Activated CD4-positive, alpha-beta memory T cell treated with anti-CD3 and anti-CD28 coated beads for 36 hours (primary cell): ENCODE measurements at regions of chr4 and their contacts with region 1.

Region 1: DNA sequence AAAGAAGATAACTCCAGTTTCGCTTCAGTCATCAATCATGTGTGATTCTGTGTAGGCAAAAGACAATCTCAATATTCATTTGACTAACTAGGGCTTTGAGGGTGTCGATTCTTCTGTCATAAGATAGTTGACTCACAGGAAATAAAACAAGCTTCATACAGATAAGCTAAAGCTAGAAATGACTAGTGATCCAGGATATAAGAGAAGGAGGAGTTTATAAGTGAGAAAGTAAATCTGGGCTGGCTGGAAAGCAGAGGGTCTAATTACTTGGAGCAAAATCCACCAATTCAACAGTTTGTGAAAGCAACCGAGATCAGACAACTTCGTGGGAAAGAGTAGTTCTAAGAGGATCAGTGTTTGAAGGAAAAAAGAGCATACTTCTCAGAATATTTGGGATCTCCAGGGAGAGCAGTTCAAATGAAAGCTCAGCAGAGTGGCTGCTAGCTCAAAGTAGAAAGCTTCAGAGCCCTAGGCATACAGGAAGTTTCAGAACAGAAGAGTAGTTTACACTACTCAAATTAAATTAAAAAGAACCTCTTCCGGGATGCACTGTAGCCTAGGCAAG is 429.3 kb downstream of the INPP4B start:
- DNase-seq: no peak
- H3K4me3 Mint-ChIP-seq: peak overlapping the region; percentile 72
- H3K27ac Mint-ChIP-seq: peak overlapping the region; percentile 92
- H3K4me1 Mint-ChIP-seq: peaks cover 67% of the 10 kb centered on the region
- H3K27me3 Mint-ChIP-seq: no peaks in the 10 kb centered on the region

Region 2: DNA sequence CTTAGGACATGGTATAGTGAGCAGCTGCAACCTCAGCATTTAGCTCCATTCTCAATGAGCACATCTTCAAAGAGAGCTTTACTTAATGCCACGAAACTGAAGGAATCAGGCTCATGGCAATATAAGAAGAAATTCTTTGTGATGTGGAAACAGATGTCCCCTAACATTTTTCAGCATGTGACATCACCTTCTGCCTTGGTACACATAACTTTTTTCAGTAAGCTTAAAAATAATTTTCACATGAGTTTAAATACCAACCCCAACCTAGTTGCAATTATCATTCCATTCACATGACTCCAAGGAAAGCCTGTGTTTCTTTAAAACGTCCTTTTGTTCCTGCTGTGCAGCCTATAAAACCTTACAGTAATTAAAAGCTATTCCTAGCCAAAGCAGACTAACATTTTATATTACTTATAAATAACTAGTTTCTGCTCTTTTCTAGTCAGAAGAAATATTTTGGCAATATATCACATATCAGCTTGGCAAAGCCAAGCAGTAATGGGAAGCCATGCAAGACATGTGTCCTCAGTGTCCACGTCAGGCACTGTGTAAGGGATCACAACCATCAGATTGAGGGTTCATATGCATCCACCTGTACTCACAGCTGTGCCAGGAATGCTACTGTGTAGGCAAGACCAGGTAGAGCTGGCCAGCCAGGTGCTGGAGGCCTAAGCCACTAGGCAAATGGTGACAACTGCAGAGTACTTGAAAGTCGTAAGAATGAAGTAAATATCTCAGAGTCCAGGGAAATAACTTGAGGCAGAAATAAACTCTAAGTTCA is 37.3 kb before region 1 on chr4:
- CTCF ChIA-PET with region 1: interaction called, 6 read pairs
- POLR2A ChIA-PET with region 1: interaction called, 11 read pairs
- intact Hi-C with region 1: loop called (anchors 1 kb)
- DNase-seq: no peak
- H3K4me3 Mint-ChIP-seq: no peak overlapping the region
- H3K27ac Mint-ChIP-seq: peak overlapping the region; percentile 85
- H3K4me1 Mint-ChIP-seq: peaks cover 78% of the 10 kb centered on the region
- H3K27me3 Mint-ChIP-seq: no peaks in the 10 kb centered on the region

Region 3: DNA sequence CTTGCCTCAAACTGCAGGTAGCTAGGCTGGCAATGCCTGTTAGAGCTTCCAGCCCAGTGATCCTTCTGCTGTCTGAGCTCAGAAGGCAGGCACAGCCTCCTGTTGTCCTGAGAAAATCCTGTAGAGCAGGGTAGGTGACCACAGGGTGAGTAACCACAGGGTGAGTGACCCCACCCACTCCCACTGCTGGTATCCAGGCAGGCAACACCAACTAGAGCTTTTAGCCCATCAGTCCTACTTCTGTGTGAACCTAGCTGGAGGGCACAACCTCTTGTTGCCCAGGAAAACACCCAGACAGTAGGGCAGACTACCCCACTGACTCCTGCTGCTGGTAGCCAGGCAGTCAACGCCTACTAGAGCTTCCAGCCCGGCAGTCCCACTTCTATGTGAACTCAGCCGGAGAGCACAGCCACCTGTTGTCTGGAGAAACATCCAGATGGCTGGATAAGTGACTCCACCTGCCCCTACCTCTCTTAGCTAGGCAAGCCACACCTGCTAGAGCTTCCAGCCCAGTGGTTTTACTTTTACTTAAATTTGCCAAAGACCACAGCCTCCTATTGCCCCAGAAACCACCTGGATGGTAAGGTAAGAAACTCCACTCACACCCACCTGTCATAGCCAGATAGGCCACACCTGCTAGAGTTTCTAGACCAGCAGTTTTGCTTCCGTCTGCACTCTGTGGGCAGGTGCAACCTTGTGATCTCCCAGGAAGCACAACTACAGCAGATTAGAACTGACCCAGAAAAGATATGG is 57.7 kb after region 1 on chr4:
- CTCF ChIA-PET with region 1: no interaction called
- POLR2A ChIA-PET with region 1: no interaction called
- intact Hi-C with region 1: loop called (anchors 2 kb)
- DNase-seq: no peak
- H3K4me3 Mint-ChIP-seq: no peak overlapping the region
- H3K27ac Mint-ChIP-seq: peak overlapping the region; percentile 38
- H3K4me1 Mint-ChIP-seq: peaks cover 31% of the 10 kb centered on the region
- H3K27me3 Mint-ChIP-seq: no peaks in the 10 kb centered on the region

Region 4: GRCh38 chr4:142558851-142559250 is 142.1 kb after region 1 on chr4:
- CTCF ChIA-PET with region 1: interaction called, 4 read pairs
- POLR2A ChIA-PET with region 1: interaction called, 7 read pairs
- intact Hi-C with region 1: loop called (anchors 2 kb)
- DNase-seq: no peak
- H3K4me3 Mint-ChIP-seq: peak overlapping the region; percentile 64
- H3K27ac Mint-ChIP-seq: peak overlapping the region; percentile 76
- H3K4me1 Mint-ChIP-seq: peaks cover 75% of the 10 kb centered on the region
- H3K27me3 Mint-ChIP-seq: no peaks in the 10 kb centered on the region

Region 5: GRCh38 chr4:142637614-142638013 is 220.8 kb after region 1 on chr4:
- CTCF ChIA-PET with region 1: no interaction called
- POLR2A ChIA-PET with region 1: no interaction called
- intact Hi-C with region 1: no loop called
- DNase-seq: no peak
- H3K4me3 Mint-ChIP-seq: no peak overlapping the region
- H3K27ac Mint-ChIP-seq: no peak overlapping the region
- H3K4me1 Mint-ChIP-seq: no peaks in the 10 kb centered on the region
- H3K27me3 Mint-ChIP-seq: no peaks in the 10 kb centered on the region